ENCODE measurements at regions of chrX and their contacts with region 1.

Region 1: DNA sequence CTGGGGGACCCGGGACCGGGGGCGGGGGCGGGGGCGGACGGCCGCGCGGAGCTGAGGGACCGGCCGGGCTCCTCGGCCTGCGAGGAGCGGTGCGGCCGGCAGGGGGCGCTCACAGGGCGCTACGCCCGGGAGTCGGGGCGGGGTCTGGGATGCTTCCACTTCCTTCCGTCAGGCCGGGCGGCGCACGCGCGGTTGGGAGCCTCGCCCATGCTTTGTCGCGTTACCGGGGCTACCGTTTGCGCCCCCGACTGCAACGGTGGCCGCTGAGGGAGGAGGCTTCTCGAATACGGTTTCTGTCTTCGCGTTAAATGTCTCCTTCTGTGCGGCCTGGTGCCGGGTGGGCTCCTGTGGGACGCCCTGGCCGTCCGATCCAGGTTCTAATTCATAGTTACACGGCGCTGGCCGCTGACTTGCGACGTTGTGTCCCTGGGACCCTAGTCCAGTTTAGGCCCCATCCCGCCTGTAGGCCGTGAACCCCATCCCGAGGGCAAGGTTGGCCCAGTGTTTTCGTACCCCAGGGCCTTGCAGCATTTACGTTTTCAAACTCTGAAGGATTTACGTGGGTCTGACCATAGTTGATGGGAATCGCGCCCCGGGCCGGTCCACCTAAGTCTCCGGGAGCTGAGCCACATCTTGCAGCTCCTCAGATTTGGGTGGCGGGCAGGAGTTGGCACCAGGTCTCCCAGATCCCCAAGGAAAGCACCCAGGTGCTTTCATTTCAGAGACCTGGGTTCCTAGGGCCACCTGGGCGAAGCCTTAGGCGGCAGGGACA is 549 bp downstream of the MSL3 start:
- DNase-seq: peak; percentile 94
- H3K4me3 ChIP-seq: peak overlapping the region; percentile 58 to 74 (median 66)
- H3K27ac ChIP-seq: peak overlapping the region; percentile 87 to 92 (median 89)
- H3K4me1 ChIP-seq: peaks cover 0 to 17% (median 2%) of the 10 kb centered on the region in 4 donors
- H3K27me3 ChIP-seq: no peaks in the 10 kb centered on the region
- CTCF ChIP-seq: peak in 3 of 4 experiments; percentile 13 to 69 (median 19)
- EP300 ChIP-seq: no peak
- POLR2A ChIP-seq: no peak

Region 2: DNA sequence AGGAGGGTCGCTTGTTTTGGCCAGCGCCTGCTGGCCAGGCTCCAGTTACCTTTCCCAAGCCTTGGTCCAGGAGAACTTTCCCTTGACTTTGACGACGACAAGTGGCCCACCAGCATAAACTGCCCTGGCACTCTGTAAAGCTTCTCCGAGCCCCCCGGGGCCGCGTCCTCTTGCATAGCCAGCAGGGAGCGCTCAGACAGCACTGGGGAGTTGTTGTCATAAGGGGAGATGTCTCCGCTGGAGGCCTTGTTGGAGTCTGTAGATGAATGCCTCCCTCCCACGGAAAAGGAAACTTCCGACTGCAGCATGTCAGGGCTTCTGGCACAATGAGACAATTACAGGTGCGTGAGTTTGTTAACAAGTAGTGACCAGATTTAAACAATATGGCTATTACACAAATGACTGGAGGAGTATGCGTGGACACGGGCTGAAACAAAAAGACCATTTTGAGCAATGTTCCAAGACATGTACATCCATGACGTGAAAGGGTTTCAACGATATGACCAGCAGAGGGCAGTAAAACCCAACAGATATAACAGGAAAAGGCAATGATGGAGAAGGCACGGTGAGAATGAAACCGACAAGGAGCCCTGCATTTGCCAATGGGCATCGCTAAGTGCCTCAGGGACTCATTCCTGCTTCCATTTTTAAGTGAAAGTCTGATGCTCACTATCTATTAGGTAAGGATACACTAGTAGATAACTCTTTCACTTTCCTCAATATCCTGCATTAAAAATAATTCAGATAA is 614.5 kb before region 1 on chrX:
- intact Hi-C with region 1: loop called (anchors 5 kb)
- DNase-seq: peak; percentile 77
- H3K4me3 ChIP-seq: no peak overlapping the region
- H3K27ac ChIP-seq: peak overlapping the region in 2 of 4 donors; percentile 23 to 34
- H3K4me1 ChIP-seq: peaks cover 0 to 9% (median 0%) of the 10 kb centered on the region in 4 donors
- H3K27me3 ChIP-seq: no peaks in the 10 kb centered on the region
- CTCF ChIP-seq: peak; percentile 46 to 72 (median 50)
- EP300 ChIP-seq: no peak
- POLR2A ChIP-seq: no peak

Region 3: DNA sequence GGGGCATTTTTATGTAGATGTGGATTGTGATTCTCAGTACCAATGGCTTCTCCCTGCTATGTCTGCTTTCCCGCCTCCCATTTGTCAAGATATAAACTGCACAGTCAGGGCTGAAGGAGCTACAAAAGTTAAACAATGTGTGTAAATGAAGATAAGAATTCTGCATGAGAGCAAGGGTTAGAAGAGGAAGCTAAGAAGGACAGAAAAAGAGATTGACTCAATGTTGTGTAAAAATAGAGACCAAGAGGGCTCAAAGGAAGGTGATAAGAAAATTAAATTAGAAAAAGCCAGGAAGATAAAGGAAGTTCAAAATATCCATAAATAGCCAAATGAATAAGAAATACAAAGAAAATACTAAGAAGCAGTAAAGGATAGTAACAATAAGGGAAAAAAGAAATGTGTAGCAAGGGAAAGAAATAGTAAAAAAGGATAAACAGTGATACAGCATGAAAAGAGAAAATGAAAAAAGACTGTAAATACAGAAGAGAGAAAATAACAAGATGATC is 382.9 kb before region 1 on chrX:
- intact Hi-C with region 1: loop called (anchors 10 kb)
- DNase-seq: no peak
- H3K4me3 ChIP-seq: no peak overlapping the region
- H3K27ac ChIP-seq: no peak overlapping the region
- H3K4me1 ChIP-seq: no peaks in the 10 kb centered on the region
- H3K27me3 ChIP-seq: no peaks in the 10 kb centered on the region
- CTCF ChIP-seq: no peak
- EP300 ChIP-seq: no peak
- POLR2A ChIP-seq: no peak

Region 4: DNA sequence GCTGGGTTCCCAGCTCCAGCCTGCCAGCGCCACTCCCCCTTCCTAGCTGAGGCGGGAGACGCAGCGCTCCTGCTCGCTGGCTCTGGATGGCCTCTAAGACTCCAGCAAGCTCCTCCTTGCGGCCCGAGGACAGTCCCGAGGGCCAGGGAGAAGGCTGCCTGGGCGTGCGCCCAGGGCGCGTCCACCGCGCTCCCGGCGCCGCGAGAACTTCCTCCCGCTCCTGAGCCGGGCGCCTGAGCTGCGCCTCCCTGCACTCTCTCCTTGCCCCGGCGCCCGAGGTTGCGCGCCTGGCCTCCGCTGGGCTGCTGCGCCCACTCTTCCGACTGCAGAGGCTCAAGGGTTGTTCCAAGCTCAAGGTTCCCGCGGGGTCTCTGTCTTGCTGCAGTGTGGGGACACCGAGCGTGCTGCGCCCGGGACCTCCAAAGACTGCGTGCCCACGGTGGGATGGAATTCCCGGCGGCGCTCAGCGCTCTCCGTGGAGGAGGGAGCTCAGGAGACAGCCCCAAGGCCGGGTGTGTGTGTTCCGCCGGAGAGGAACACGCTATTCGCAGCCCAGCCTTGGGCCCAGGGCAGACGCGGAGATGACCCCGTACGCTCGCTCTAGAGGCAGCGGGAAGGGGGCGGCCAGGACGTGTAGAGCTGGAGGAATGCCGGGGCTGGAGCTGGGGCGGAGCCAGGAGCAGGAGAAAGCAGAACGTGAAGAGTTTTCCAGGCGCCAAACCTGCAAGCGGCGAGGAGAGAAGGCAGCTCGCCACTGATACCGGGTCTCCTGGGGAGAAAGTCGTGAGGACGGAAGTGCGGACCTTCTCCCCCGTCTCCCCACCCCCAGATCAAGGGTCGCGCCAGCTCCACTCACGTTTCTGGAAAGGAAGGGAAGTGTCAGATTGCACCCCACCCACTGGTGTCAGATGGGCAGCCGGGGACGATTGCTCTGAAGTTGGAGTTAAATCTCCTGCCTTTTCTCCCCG is 93.2 kb before region 1 on chrX and contains the start of gene ARHGAP6:
- intact Hi-C with region 1: loop called (anchors 5 kb)
- DNase-seq: peak; percentile 92
- H3K4me3 ChIP-seq: peak within 1 kb of the TSS; percentile 56 to 67 (median 60)
- H3K27ac ChIP-seq: peak within 1 kb of the TSS; percentile 77 to 88 (median 85)
- H3K4me1 ChIP-seq: peaks cover 0 to 12% (median 4%) of the 10 kb centered on the region in 4 donors
- H3K27me3 ChIP-seq: no peaks in the 10 kb centered on the region
- CTCF ChIP-seq: no peak
- EP300 ChIP-seq: no peak
- POLR2A ChIP-seq: peak in 1 of 2 donors; percentile 12
- total RNA-seq, gene ARHGAP6: 36.2 to 47.6 (median 42.7) TPM

Region 5: GRCh38 chrX:11724122-11725017 is 34.2 kb before region 1 on chrX:
- intact Hi-C with region 1: loop called (anchors 5 kb)
- DNase-seq: no peak
- H3K4me3 ChIP-seq: no peak overlapping the region
- H3K27ac ChIP-seq: no peak overlapping the region
- H3K4me1 ChIP-seq: no peaks in the 10 kb centered on the region
- H3K27me3 ChIP-seq: no peaks in the 10 kb centered on the region
- CTCF ChIP-seq: peak; percentile 61 to 80 (median 65)
- EP300 ChIP-seq: no peak
- POLR2A ChIP-seq: no peak

Measured in sigmoid colon (tissue), 7 donors.